ENCODE measurements at regions of chr11 and their contacts with region 1.

Region 1: GRCh38 chr11:82900277-82901164 is at the start of gene PRCP:
- DNase-seq: peak; percentile 86 to 97
- H3K4me3 ChIP-seq: peak within 1 kb of the TSS; percentile 70 to 80
- H3K27ac ChIP-seq: peak within 1 kb of the TSS; percentile 84 to 92
- H3K4me1 ChIP-seq: peaks cover 0 to 3% of the 10 kb centered on the region in 2 donors
- H3K27me3 ChIP-seq: no peaks in the 10 kb centered on the region
- CTCF ChIP-seq: no peak
- total RNA-seq, gene PRCP: 151 TPM

Region 2: GRCh38 chr11:82733444-82734119 is 166.9 kb before region 1 on chr11 and contains the start of gene FAM181B:
- intact Hi-C with region 1: loop called (anchors 2 kb)
- DNase-seq: peak in 1 of 2 donors; percentile 81
- H3K4me3 ChIP-seq: peak within 1 kb of the TSS; percentile 80 to 90
- H3K27ac ChIP-seq: peak within 1 kb of the TSS; percentile 66 to 68
- H3K4me1 ChIP-seq: no peaks in the 10 kb centered on the region
- H3K27me3 ChIP-seq: no peaks in the 10 kb centered on the region
- CTCF ChIP-seq: no peak
- total RNA-seq, gene FAM181B: not detected

Region 3: GRCh38 chr11:82867495-82868082 is 32.9 kb before region 1 on chr11:
- intact Hi-C with region 1: loop called (anchors 2 kb)
- DNase-seq: peak in 1 of 2 donors; percentile 89
- H3K4me3 ChIP-seq: peak overlapping the region in 1 of 2 donors; percentile 25
- H3K27ac ChIP-seq: no peak overlapping the region
- H3K4me1 ChIP-seq: peaks cover 0 to 2% of the 10 kb centered on the region in 2 donors
- H3K27me3 ChIP-seq: no peaks in the 10 kb centered on the region
- CTCF ChIP-seq: peak; percentile 51 to 73 (median 65)

Region 4: DNA sequence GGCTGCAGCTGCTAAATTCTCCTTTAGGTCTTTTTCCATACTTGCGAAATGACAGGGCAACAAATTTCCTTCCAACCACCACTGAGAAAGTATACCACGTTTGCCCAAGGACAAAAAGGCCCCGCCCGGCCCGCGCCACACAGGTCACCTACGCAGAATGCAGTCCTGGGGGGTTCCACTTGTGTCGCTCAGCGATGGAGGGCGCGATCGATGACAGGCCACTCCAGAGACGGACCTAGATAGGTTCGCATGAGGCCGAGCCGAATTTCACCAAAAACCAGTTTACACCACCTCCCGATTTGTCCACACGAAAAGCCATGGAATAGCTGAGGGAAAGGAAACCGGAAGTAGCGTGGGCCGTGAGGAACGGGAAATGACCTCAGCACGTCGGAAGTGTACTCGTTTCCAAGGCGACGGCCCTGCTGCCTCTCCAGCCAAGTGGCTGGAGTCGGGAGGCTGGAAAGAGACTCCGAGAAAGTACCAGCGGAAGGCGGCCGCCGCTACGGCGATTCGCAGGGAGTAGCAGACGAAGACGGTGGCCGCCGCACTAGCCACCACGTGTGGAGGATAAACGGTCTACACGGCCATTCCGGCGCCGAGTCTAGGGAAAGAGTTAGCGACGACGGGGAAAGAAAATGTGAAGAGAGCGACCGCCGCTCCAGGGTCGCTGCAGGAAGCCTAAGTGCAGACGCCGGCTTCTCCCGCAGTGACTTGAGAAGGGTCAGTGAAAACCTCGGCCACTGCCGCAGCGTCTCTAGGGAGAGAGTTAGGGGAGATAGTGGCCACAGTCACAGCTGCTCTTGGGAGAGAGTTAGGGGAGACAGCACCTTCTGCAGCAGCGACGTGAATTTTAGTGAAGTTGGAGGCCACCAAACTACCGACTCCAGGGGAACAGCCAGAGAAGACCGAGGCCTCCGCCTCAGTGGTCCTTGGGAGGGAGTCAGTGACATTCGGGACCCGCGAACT is 293.1 kb after region 1 on chr11 and contains the start of gene ANKRD42:
- intact Hi-C with region 1: loop called (anchors 1 kb)
- DNase-seq: peak; percentile 78 to 97
- H3K4me3 ChIP-seq: peak within 1 kb of the TSS; percentile 73 to 93
- H3K27ac ChIP-seq: peak within 1 kb of the TSS; percentile 86 to 92
- H3K4me1 ChIP-seq: peaks cover 4 to 23% of the 10 kb centered on the region in 2 donors
- H3K27me3 ChIP-seq: no peaks in the 10 kb centered on the region
- CTCF ChIP-seq: no peak
- total RNA-seq, gene ANKRD42: 25.1 TPM

Region 5: GRCh38 chr11:83285771-83286528 is 385.4 kb after region 1 on chr11 and contains the start of gene CCDC90B:
- intact Hi-C with region 1: loop called (anchors 1 kb)
- DNase-seq: peak; percentile 89 to 98
- H3K4me3 ChIP-seq: peak within 1 kb of the TSS; percentile 86 to 87
- H3K27ac ChIP-seq: peak within 1 kb of the TSS; percentile 94 to 98
- H3K4me1 ChIP-seq: peaks cover 0 to 20% of the 10 kb centered on the region in 2 donors
- H3K27me3 ChIP-seq: no peaks in the 10 kb centered on the region
- CTCF ChIP-seq: peak in 1 of 3 experiments; percentile 22
- total RNA-seq, gene CCDC90B: 8.2 TPM